ENCODE measurements at regions of chr12 and their contacts with region 1.

Region 1: DNA sequence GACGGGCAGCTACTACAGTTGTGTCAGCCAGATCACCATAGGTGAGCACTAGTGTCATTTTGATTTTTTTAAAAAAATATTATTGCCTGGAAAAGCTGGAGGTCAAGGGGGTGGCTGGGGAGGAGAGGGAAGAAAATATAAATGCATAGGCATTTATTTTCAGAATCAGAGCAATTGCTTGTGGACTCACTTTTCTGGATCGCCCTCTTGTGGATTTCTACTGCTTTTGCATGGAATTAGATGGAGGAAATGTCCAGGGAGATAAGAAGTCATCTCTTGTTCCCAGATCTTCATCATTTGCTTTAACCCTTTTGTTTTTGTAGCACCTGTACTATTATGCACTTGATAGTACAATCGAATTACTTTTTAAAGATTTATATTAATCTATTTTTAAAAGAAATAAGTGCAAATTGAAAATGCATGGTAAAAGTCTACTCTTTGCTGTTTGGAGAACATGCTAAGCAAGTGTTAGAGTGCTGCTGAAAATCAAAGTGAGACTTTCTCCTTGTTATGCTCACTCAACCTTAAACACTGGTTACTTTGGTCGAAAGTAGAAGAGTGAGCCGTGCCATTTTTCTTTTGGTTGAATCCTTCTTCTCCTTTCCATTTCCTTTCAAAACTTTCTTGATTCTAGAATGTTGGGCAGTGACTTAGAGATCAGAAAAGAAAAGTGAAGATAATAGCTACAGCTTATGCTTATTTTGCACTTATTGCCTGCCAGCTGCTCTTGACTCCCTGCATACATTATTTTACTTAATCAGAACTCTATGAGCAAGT is 60.6 kb upstream of the ANO4 start:
- DNase-seq: no peak
- ATAC-seq: no peak
- H3K4me3 ChIP-seq: no peak overlapping the region
- H3K27ac ChIP-seq: no peak overlapping the region
- H3K4me1 ChIP-seq: no peaks in the 10 kb centered on the region
- H3K27me3 ChIP-seq: peaks cover 0 to 5% (median 0%) of the 10 kb centered on the region in 3 donors
- CTCF ChIP-seq: no peak

Region 2: DNA sequence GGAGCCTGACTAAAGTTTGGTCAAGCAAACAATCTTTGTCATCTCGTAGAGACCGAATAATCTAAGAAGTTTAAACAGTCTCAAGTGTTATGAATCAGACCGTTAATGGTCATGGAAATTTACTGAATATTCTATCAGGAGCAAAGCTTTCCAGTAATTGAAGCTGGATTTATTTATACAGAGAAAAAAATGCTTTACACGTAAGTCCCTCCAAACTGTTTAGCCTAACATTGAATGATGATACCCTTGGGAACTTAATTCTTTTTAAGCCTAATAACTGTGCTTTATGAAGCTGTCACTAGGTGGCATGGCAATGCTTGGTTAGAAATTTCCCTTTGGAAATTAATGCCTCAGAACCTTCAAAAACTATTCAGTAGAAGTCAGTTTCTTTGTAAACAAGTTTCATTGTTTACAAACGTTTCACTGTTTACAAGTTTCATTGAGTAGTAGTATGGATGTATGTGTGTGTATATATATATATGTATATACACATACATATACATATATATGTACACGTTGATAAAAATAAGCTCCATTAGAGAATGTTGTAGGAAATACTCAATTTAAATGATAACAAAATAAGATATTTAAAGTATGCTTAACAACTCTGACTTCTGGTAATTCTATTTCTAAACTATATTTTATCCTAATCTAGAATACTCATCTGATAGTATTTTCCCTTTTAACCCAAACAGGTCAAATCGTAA is 499.3 kb before region 1 on chr12:
- intact Hi-C with region 1: loop called (anchors 5 kb)
- DNase-seq: no peak
- ATAC-seq: peak in 2 of 4 donors; percentile 48 to 71
- H3K4me3 ChIP-seq: no peak overlapping the region
- H3K27ac ChIP-seq: no peak overlapping the region
- H3K4me1 ChIP-seq: no peaks in the 10 kb centered on the region
- H3K27me3 ChIP-seq: no peaks in the 10 kb centered on the region
- CTCF ChIP-seq: peak; percentile 73

Region 3: DNA sequence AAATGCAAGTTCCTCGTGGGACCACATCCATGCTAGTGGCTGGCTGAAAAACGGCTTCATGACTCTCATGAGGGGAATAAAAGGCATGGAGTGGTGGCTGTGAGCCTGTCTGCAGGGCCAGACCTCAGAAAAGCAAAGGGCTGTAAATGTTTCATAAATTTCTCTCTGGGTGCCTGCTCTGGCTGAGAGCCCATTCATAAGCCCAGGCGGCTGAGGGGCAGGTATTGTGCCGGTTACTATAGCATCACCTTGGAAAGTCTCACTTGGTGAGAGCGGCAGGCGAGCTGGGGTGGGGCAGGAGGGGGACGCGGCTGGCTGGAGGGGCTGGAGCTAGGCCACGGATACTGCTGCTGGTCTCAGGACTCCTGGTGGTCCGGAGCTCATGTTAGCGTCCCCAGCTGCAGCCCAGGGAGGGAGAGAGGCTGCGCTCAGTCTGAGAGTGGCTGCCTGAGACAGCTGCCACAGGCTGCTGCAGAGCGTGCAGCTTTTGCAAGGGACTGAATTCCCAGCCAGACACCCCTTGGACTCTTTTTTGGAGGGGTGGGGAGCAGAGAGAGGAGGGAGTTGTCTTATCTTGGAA is 377.3 kb before region 1 on chr12 and contains the start of gene SLC17A8:
- intact Hi-C with region 1: loop called in 1 of 2 experiments (anchors 10 kb)
- DNase-seq: no peak
- ATAC-seq: no peak
- H3K4me3 ChIP-seq: no peak within 1 kb of the TSS
- H3K27ac ChIP-seq: no peak within 1 kb of the TSS
- H3K4me1 ChIP-seq: no peaks in the 10 kb centered on the region
- H3K27me3 ChIP-seq: peaks cover 0 to 6% (median 2%) of the 10 kb centered on the region in 3 donors
- CTCF ChIP-seq: no peak
- total RNA-seq, gene SLC17A8: not detected

Region 4: DNA sequence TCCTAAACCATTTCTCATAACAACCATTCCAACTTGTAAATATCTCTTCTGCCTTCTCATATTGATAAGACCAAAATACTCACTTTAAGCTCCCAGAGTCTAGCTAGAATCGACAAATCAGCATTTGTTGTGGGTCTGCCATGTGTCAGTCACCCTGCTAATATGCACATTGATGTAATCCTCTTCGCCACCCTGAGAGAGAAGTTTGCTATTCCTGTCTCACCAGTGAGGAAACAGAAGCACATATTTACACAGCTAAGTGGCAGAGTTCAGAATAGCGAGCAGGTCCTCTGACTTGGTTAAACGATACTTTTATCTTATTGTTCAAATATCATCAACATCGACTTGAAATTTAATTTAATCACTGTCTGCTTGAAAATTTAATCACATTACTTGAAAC is 202.7 kb after region 1 on chr12:
- intact Hi-C with region 1: no loop called
- DNase-seq: no peak
- ATAC-seq: no peak
- H3K4me3 ChIP-seq: no peak overlapping the region
- H3K27ac ChIP-seq: no peak overlapping the region
- H3K4me1 ChIP-seq: no peaks in the 10 kb centered on the region
- H3K27me3 ChIP-seq: peaks cover 0 to 2% (median 0%) of the 10 kb centered on the region in 3 donors
- CTCF ChIP-seq: no peak

Measured in psoas muscle (tissue), 8 donors.